Right ventricle myocardium inferior (tissue), 1 donor: ENCODE measurements at regions of chr12 and their contacts with region 1.

Region 1: DNA sequence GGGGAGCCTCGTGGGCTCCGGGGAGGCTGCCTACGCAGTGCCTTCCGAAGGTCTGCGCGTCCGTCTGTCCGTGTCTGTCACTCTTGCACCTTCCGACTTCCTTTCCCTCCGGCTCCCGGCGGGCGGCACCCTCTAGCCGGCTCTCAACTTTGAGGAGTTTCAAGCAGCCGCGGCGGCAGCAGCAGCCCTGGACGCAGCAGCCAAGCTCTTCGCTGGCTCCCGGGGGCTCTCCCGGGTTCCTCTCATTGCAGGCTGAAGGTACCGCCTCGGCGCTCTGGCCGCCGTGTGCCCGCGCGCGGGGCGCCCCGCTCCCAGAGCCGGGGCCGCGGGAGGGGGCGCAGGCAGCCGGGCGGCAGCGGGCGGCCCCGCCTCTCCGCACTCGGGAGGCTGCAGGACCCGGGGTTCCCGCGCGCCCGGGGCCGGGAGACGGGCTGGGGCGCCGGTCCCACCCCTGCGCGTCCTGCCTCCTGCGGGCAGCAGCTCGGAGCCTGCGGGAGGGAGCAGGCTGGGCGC is at the starts of genes AMIGO2 and PCED1B:
- DNase-seq: peak; percentile 85
- ATAC-seq: peak; percentile 82
- total RNA-seq, gene AMIGO2: 2.7 TPM
- total RNA-seq, gene PCED1B: 0.89 TPM

Region 2: GRCh38 chr12:47307680-47308399 is 228.3 kb after region 1 on chr12:
- intact Hi-C with region 1: loop called (anchors 5 kb)
- DNase-seq: no peak
- ATAC-seq: peak; percentile 73

Region 3: DNA sequence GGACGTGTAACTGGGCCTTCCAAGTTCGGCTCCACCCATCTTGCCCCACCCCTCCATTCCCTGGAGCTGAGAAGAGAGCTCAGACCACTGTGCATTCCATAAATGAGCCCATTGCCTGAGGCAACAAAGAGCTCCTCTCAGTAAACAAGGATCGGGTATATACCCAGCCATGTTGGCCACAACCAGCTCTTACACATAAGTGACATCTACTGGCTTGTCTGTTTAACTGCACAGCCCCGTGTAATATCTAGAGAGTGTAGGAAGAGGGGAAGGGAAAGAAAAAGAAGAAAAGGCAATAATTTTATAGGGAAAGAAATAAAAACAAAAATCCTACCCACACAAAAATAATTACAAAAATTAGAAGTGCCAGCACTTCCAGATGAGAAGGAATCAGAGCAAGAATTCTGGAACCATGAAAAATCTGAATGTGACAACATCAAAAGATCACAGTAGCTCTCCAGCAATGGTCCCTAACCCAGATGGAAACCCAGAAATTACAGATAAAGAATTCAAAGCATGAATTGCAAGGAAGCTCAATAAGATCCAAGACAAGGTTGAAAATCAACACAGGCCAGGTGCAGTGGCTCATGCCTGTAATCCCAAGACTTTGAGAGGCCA is 318.2 kb after region 1 on chr12:
- intact Hi-C with region 1: loop called (anchors 10 kb)
- DNase-seq: no peak
- ATAC-seq: peak; percentile 74